Activated B cell treated with CpG ODN at 0.5 μM for 24 hours (primary cell): ENCODE measurements at regions of chr16 and their contacts with region 1.

Region 1: DNA sequence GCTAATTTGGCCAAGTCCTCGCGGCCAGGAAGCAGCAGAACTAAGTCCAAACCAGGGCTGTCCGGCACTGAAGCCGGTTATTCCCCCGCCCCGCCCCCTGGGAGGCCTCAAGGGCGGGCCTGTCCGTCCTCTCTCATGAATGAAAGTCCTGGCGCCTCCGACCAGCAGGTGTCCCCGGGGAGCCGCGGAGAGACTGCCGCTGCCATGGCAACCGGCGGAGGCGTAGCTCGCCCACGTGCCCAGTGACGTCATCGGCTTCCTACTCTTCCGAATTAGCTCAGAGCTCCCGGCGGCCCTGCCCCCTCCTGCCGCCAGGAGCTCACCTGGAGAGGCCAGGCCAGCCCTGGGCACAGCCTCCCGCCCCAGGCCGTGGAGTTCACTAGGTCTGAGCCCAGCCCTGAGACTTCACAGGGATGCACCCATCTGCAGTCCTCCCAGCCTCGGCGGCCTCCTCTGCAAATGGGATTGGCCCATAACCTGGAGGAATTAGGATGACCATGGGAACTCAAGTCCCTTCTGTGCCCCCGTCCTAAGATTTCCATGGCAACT is 1.3 kb downstream of the SPATA2L start:
- DNase-seq: peak; percentile 93
- ATAC-seq: peak; percentile 27
- H3K4me3 Mint-ChIP-seq: peak overlapping the region; percentile 83
- H3K27ac Mint-ChIP-seq: peak overlapping the region; percentile 74
- H3K4me1 Mint-ChIP-seq: peaks cover 27% of the 10 kb centered on the region
- H3K27me3 Mint-ChIP-seq: no peaks in the 10 kb centered on the region
- CTCF ChIP-seq: no peak

Region 2: GRCh38 chr16:89657442-89658220 is 42.5 kb before region 1 on chr16 and contains the starts of genes CHMP1A and SPATA33:
- CTCF ChIA-PET with region 1: interaction called, 3 read pairs
- POLR2A ChIA-PET with region 1: interaction called, 4 read pairs
- intact Hi-C with region 1: loop called (anchors 1 kb)
- DNase-seq: peak; percentile 96
- ATAC-seq: peak; percentile 91
- H3K4me3 Mint-ChIP-seq: peak within 1 kb of the TSS; percentile 85
- H3K27ac Mint-ChIP-seq: peak within 1 kb of the TSS; percentile 75
- H3K4me1 Mint-ChIP-seq: peaks cover 33% of the 10 kb centered on the region
- H3K27me3 Mint-ChIP-seq: no peaks in the 10 kb centered on the region
- CTCF ChIP-seq: no peak
- total RNA-seq, gene CHMP1A: 89.8 and 98.7 TPM in 2 replicates
- total RNA-seq, gene SPATA33: 8.5 TPM in 2 replicates

Region 3: GRCh38 chr16:89711601-89712273 is 11.6 kb after region 1 on chr16:
- CTCF ChIA-PET with region 1: no interaction called
- POLR2A ChIA-PET with region 1: interaction called, 8 read pairs
- intact Hi-C with region 1: loop called (anchors 1 kb)
- DNase-seq: peak; percentile 76
- ATAC-seq: peak; percentile 96
- H3K4me3 Mint-ChIP-seq: peak overlapping the region; percentile 76
- H3K27ac Mint-ChIP-seq: no peak overlapping the region
- H3K4me1 Mint-ChIP-seq: peaks cover 2% of the 10 kb centered on the region
- H3K27me3 Mint-ChIP-seq: no peaks in the 10 kb centered on the region
- CTCF ChIP-seq: no peak

Region 4: GRCh38 chr16:89764711-89765201 is 64.6 kb after region 1 on chr16:
- CTCF ChIA-PET with region 1: interaction called, 3 read pairs
- POLR2A ChIA-PET with region 1: interaction called, 8 read pairs
- intact Hi-C with region 1: loop called (anchors 1 kb)
- DNase-seq: peak; percentile 62
- ATAC-seq: peak; percentile 83
- H3K4me3 Mint-ChIP-seq: peak overlapping the region; percentile 88
- H3K27ac Mint-ChIP-seq: peak overlapping the region; percentile 95
- H3K4me1 Mint-ChIP-seq: peaks cover 69% of the 10 kb centered on the region
- H3K27me3 Mint-ChIP-seq: no peaks in the 10 kb centered on the region
- CTCF ChIP-seq: no peak

Region 5: GRCh38 chr16:89779231-89779908 is 79.2 kb after region 1 on chr16:
- CTCF ChIA-PET with region 1: no interaction called
- POLR2A ChIA-PET with region 1: no interaction called
- intact Hi-C with region 1: no loop called
- DNase-seq: no peak
- ATAC-seq: no peak
- H3K4me3 Mint-ChIP-seq: no peak overlapping the region
- H3K27ac Mint-ChIP-seq: no peak overlapping the region
- H3K4me1 Mint-ChIP-seq: no peaks in the 10 kb centered on the region
- H3K27me3 Mint-ChIP-seq: no peaks in the 10 kb centered on the region
- CTCF ChIP-seq: no peak

Region 6: GRCh38 chr16:89795676-89796075 is 95.5 kb after region 1 on chr16:
- CTCF ChIA-PET with region 1: interaction called, 102 read pairs
- POLR2A ChIA-PET with region 1: interaction called, 3 read pairs
- intact Hi-C with region 1: no loop called
- DNase-seq: no peak
- ATAC-seq: no peak
- H3K4me3 Mint-ChIP-seq: no peak overlapping the region
- H3K27ac Mint-ChIP-seq: no peak overlapping the region
- H3K4me1 Mint-ChIP-seq: peaks cover 2% of the 10 kb centered on the region
- H3K27me3 Mint-ChIP-seq: no peaks in the 10 kb centered on the region
- CTCF ChIP-seq: no peak

Region 7: GRCh38 chr16:89860747-89861304 is 160.7 kb after region 1 on chr16:
- CTCF ChIA-PET with region 1: interaction called, 27 read pairs
- POLR2A ChIA-PET with region 1: no interaction called
- intact Hi-C with region 1: loop called (anchors 1 kb)
- DNase-seq: peak; percentile 82
- ATAC-seq: peak; percentile 96
- H3K4me3 Mint-ChIP-seq: no peak overlapping the region
- H3K27ac Mint-ChIP-seq: no peak overlapping the region
- H3K4me1 Mint-ChIP-seq: peaks cover 25% of the 10 kb centered on the region
- H3K27me3 Mint-ChIP-seq: peaks cover 3% of the 10 kb centered on the region
- CTCF ChIP-seq: peak; percentile 49